ENCODE measurements at regions of chr12 and their contacts with region 1.

Region 1: DNA sequence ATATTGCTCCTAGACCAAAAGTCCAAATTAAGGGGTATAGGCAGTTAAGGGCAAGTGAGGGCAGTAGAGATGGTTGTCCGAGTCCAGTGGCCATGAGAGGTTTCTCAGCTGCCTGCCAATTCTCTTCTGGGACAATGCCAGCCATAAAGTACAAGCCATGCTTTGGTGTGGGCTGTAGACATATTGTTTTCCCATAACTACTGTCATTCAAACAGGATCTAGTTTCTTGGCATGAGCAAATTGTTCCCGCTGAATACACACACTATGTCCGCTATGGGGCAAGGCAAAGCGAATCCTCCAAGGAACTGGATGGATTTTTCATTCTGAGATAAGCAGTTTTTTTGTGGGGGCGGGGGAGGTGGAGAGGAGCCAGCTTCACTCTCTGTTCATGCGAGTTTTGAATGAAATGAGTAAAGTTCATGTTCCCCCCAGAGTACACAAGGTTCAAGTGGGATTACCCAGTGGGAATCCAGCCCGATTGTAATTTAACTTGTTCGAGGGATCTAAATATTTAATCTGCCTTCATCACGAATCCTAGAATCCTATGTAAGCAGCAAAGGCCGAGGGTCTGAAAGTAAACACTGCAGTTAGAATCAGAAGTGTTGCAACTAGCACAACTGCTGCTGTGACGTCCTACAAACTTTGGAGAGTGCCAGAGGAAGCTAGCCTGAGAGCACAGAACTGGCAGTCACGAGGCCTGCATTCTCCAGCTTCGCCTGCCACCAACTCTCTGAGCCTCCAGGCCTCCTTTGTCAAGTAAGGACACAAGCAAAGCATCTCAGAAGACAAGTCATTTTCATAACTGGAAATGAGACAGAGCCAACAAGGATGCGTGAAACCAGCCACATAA is 137.0 kb downstream of the CRADD start:
- DNase-seq: no peak
- H3K4me3 Mint-ChIP-seq: no peak overlapping the region
- H3K27ac Mint-ChIP-seq: peak overlapping the region; percentile 69
- H3K4me1 Mint-ChIP-seq: peaks cover 33% of the 10 kb centered on the region
- H3K27me3 Mint-ChIP-seq: no peaks in the 10 kb centered on the region
- CTCF ChIP-seq: no peak

Region 2: DNA sequence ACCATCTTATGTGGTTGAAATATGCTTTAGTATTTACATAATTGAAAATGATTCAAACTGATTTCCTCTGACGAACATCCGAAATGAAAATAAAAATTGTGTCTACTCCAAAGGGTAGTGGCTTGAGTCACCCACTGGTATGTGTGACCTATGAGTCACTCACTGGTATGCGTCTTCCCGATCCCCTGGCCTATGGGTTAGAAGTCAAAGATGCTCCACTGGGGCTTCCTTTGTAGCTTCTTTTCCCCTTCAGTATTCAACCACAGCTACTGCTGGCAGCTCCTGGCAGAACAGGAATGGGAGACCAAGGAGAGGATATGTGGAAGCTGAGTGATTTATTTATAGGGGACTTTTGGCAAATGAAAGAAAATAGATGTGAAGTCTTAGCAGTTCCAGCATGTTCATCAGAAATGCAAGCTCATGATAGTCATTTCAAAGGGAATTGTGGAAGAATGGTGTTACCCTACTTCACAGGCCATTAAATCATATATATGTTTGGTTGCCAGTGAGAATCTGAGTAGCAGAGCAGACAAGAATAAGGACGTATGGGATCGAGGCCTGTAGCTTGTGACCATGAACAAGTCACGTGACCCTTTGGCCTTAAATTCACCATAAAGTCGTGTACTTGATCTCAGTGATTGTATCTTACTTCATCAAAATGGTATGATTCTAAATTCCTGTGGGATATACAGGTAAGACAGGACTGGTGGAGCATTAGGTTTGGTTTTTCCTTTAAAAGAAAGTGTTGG is 28.8 kb before region 1 on chr12:
- CTCF ChIA-PET with region 1: interaction called, 7 read pairs
- POLR2A ChIA-PET with region 1: interaction called, 30 read pairs
- intact Hi-C with region 1: no loop called
- DNase-seq: peak; percentile 94
- H3K4me3 Mint-ChIP-seq: peak overlapping the region; percentile 3
- H3K27ac Mint-ChIP-seq: peak overlapping the region; percentile 80
- H3K4me1 Mint-ChIP-seq: peaks cover 29% of the 10 kb centered on the region
- H3K27me3 Mint-ChIP-seq: no peaks in the 10 kb centered on the region
- CTCF ChIP-seq: no peak

Region 3: DNA sequence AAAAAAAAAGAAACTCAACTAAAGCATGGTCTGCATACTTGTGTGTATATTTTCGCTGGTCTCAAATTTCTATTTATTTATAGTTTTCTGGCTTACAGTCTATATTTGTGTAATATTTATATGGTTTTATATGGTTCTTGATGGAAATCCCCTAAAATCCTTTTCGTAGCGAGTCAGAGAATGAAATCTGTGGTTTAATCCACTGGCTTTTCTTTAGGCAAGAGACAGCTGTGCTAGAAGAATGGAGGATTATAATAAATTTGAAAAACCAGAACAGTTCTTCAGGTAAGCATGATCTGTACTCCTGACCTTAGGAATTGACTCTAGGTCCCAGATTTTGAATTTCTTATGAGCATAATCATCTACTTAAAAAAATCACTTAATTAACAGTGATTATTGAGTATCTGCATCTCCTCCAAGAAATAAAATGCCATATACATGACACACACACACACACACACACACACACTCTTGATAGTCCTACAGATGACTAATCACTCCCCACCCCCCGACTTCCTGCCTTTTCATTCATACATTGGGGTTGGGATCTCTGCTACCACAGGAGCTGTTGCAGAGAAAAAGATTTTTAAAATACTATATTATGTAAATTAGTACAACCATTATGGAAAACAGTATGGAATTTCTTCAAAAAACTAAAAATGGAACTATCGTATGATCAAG is 23.6 kb before region 1 on chr12:
- CTCF ChIA-PET with region 1: interaction called, 7 read pairs
- POLR2A ChIA-PET with region 1: interaction called, 30 read pairs
- intact Hi-C with region 1: no loop called
- DNase-seq: peak; percentile 84
- H3K4me3 Mint-ChIP-seq: no peak overlapping the region
- H3K27ac Mint-ChIP-seq: peak overlapping the region; percentile 46
- H3K4me1 Mint-ChIP-seq: peaks cover 23% of the 10 kb centered on the region
- H3K27me3 Mint-ChIP-seq: no peaks in the 10 kb centered on the region
- CTCF ChIP-seq: no peak

Region 4: GRCh38 chr12:95412482-95413311 is 1598.5 kb after region 1 on chr12:
- CTCF ChIA-PET with region 1: no interaction called
- POLR2A ChIA-PET with region 1: no interaction called
- intact Hi-C with region 1: loop called (anchors 10 kb)
- DNase-seq: peak; percentile 78
- H3K4me3 Mint-ChIP-seq: no peak overlapping the region
- H3K27ac Mint-ChIP-seq: peak overlapping the region; percentile 27
- H3K4me1 Mint-ChIP-seq: no peaks in the 10 kb centered on the region
- H3K27me3 Mint-ChIP-seq: no peaks in the 10 kb centered on the region
- CTCF ChIP-seq: no peak

Measured in MCF 10A (cell line).